ENCODE measurements at regions of chr17 and their contacts with region 1.

Region 1: DNA sequence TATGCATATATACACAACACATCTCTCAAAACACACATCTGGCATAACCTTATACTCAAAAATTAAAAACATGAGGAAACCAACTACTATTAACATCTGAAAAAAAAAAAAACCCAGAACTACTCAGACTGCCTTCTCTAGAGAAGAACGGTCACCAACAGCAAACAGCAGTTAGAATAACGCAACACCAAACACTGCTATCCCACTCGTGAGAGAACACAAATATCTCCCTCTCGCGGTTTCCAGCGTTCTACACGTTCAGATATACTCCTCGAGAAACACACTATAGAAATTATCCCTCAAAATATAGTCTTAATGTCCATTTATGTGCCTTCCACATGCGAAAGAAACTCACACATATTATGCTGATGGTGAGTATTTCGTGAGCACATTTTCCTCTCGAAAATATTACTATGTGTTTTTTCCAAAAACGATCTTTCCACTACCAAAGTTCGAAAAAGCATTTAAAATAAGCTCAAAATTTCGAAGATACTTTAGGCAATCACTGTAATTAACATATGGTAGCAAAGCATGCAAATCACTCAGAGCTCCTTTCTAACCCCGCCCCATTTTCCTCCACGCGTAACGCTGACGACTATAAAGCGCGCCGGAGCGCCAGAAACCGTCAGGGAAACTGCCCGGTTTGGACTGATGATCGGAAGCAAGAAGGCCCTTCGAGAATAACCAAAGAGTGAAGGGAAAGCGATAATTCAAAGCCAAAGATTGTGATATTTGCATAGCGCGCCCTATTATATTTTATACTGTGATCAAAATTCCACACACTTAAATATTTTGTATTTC is 60.1 kb downstream of the TEX14 start:
- DNase-seq: peak; percentile 88
- ATAC-seq: peak; percentile 96
- H3K4me3 ChIP-seq: peak overlapping the region; percentile 37 to 59
- H3K27ac ChIP-seq: peak overlapping the region; percentile 96
- H3K4me1 ChIP-seq: peaks cover 8% of the 10 kb centered on the region
- H3K27me3 ChIP-seq: no peaks in the 10 kb centered on the region
- CTCF ChIP-seq: no peak

Region 2: GRCh38 chr17:58517734-58518609 is 113.8 kb before region 1 on chr17:
- CTCF ChIA-PET with region 1: interaction called, 5 read pairs
- POLR2A ChIA-PET with region 1: interaction called, 7 read pairs
- in situ Hi-C with region 1: no loop called
- intact Hi-C with region 1: loop called (anchors 10 kb)
- DNase-seq: peak; percentile 93
- ATAC-seq: peak; percentile 90
- H3K4me3 ChIP-seq: peak overlapping the region; percentile 87 to 95
- H3K27ac ChIP-seq: peak overlapping the region; percentile 82
- H3K4me1 ChIP-seq: peaks cover 9% of the 10 kb centered on the region; the same call in 1 of the 2 replicates
- H3K27me3 ChIP-seq: no peaks in the 10 kb centered on the region
- CTCF ChIP-seq: no peak

Region 3: GRCh38 chr17:58643140-58643539 is 11.4 kb after region 1 on chr17:
- CTCF ChIA-PET with region 1: no interaction called
- POLR2A ChIA-PET with region 1: interaction called, 10 read pairs
- in situ Hi-C with region 1: no loop called
- intact Hi-C with region 1: no loop called
- DNase-seq: no peak
- ATAC-seq: no peak; the same call in 1 of the 2 replicates
- H3K4me3 ChIP-seq: no peak overlapping the region
- H3K27ac ChIP-seq: no peak overlapping the region
- H3K4me1 ChIP-seq: no peaks in the 10 kb centered on the region
- H3K27me3 ChIP-seq: no peaks in the 10 kb centered on the region
- CTCF ChIP-seq: no peak

Region 4: DNA sequence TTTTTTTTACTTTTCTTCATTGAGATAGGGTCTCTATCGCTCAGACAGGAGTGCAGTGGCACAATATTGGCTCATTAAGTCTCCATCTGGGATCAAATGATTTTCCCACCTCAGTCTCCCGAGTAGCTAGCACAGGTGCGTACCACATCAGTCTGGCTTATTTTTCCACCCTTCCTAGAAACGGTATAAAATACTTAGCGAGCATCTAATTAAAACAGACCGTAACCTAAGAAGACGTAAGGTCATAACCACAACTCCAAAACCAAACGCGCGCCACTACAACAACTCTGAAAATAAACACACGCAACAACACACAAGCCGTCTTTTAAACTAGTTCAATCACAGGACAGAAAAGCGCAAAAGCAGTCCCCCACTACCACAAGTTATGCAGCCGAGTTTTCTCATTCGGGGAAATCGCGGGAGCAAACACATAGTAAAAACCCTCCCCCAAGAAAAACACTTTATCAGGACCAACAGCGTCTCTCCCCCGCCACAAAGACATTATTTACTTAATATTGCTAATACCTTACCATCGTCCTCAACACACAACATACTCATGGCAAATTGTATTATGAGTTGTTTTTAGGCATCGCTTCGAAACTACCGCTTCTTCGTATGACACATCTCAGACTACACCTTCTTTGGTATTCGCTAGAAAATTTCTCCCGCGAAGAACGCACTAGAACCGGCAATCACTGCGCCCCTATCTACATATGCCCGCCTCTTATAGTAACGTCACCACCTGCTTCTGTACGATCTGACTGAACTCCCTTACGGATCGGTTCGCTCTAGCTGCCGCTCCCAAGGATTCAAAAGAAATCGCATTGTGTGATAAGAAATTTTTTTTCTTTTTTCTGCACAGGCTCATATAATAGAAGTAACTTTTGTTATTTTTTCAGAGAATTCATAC is 27.3 kb after region 1 on chr17:
- CTCF ChIA-PET with region 1: no interaction called
- POLR2A ChIA-PET with region 1: interaction called, 4 read pairs
- in situ Hi-C with region 1: no loop called
- intact Hi-C with region 1: loop called (anchors 1 kb)
- DNase-seq: peak; percentile 93
- ATAC-seq: peak; percentile 95
- H3K4me3 ChIP-seq: peak overlapping the region; percentile 43 to 56
- H3K27ac ChIP-seq: peak overlapping the region; percentile 95
- H3K4me1 ChIP-seq: no peaks in the 10 kb centered on the region
- H3K27me3 ChIP-seq: no peaks in the 10 kb centered on the region
- CTCF ChIP-seq: no peak